T-cell (primary cell): ENCODE measurements at regions of chr9 and their contacts with region 1.

Region 1: DNA sequence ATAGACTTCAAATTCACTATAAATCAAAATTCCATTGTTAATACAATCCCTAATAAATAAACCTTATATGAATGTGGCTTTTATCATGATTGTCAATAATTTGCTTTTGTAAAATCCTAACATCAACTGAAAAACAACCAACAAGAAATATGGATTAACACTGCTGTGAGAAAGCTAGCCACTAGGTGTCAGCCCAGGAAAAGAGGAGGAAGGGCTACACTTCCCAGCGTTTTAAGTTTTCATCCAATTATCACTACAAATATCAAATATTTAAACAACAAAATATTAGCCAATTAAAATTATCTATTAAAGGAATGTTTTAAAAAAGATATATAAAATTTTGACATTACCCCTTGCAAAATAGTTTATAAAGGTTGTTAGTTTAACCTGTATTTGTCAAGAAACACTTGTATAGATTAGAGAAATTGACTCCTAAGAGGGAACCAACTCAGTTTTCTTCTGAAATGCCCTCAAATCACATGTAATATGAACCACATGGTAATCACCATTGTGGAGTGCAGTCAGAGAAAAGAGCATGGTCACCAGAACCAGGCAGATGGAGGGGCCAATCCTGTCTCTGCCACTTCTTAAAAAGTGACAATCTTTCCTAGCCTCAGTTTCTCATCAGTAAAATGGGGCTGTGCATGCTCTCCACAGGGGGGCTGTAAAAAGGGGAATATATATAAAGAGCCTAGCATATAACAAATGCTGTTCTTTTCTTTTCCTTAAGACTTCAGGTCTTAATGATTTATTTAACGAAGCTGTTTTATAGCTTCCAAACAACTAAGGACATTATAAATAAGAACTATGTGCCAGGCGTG is 188.2 kb downstream of the CRB2 start:
- DNase-seq: peak in 7 of 35 experiments; percentile 1 to 45 (median 4)
- ATAC-seq: no peak
- H3K4me3 ChIP-seq: no peak overlapping the region
- H3K4me3 Mint-ChIP-seq: no peak overlapping the region
- H3K27ac ChIP-seq: no peak overlapping the region
- H3K27ac Mint-ChIP-seq: no peak overlapping the region
- H3K4me1 ChIP-seq: no peaks in the 10 kb centered on the region
- H3K4me1 Mint-ChIP-seq: no peaks in the 10 kb centered on the region
- H3K27me3 ChIP-seq: no peaks in the 10 kb centered on the region
- H3K27me3 Mint-ChIP-seq: no peaks in the 10 kb centered on the region

Region 2: DNA sequence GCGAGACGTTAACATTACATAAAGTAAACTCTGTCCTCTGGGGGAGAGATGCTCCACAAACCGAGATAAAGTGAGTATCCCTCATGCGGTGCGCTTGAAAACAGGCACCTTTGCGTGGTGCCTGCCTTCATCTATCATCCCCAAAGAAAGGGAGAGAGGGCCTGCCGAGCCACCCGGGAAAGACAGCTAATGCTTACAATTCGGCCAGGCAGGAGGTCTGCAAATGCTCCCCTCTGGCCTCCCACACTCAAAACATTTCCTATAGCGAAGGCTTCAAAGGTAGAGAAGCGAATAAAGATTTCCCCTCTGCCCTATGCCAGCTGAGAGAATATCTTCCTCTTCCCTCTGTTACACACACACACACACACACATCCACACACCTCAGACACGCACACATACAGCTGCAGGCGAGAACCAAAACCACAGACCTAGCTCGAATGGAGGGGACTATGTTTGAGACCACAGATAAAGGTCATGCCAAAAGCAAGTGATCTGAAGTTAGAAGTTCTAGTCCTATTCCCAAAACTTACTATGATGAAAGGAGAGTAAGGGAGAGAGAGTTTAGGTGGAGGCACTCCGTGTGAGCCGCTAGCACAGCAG is 55.4 kb before region 1 on chr9:
- CTCF ChIA-PET with region 1: no interaction called
- POLR2A ChIA-PET with region 1: interaction called in 1 of 2 experiments, 12 read pairs
- DNase-seq: no peak
- ATAC-seq: no peak
- H3K4me3 ChIP-seq: no peak overlapping the region
- H3K4me3 Mint-ChIP-seq: no peak overlapping the region
- H3K27ac ChIP-seq: no peak overlapping the region
- H3K27ac Mint-ChIP-seq: no peak overlapping the region
- H3K4me1 ChIP-seq: no peaks in the 10 kb centered on the region
- H3K4me1 Mint-ChIP-seq: no peaks in the 10 kb centered on the region
- H3K27me3 ChIP-seq: no peaks in the 10 kb centered on the region
- H3K27me3 Mint-ChIP-seq: no peaks in the 10 kb centered on the region